HepG2 (cell line): ENCODE measurements at regions of chr18 and their contacts with region 1.

Region 1: DNA sequence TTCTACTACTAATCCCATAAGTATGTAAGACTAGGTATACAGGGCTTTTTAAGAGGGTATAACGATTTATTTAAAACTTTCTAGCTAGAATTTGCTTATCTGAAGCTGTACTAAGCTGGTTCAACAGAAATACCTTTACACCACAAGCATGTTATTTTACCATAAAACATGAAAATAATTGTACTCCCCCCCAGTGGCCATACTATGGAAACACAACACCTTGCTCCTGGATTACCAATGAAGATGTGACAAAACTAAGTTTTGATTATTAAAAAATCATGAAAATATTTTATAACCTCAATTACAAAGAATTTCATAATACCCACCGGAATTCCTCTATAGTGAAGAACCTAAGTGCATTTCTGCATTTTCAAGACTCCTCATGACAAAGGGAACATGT is 27.3 kb downstream of the LPIN2 start:
- DNase-seq: peak; percentile 50
- ATAC-seq: no peak
- H3K4me3 ChIP-seq: no peak overlapping the region
- H3K27ac ChIP-seq: peak overlapping the region; percentile 81
- H3K4me1 ChIP-seq: peaks cover 99% of the 10 kb centered on the region
- H3K27me3 ChIP-seq: no peaks in the 10 kb centered on the region
- CTCF ChIP-seq: peak; percentile 36; the same call in 1 of the 2 replicates
- EP300 ChIP-seq: no peak
- POLR2A ChIP-seq: no peak
- RAD21 ChIP-seq: no peak

Region 2: DNA sequence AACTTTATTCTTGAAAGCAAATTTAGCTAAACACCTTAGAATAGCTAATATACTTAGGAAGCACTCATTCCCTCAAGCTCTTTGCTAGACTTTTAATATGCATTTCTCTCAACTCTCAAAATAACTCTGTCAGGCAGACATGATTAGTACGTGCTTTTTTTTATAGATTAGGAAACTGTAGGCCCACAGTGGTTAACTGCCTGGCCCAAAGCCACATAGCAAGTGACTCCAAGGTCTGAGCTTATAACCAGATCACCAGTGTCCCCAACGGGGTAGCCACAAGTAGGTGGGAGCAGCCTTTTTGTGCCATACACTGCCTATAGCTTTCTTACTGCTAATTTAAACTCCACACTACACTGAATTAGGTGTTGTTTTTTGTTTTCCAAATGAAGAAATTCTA is 991.2 kb before region 1 on chr18:
- CTCF ChIA-PET with region 1: no interaction called
- POLR2A ChIA-PET with region 1: no interaction called
- in situ Hi-C with region 1: no loop called
- intact Hi-C with region 1: no loop called
- DNase-seq: no peak
- ATAC-seq: no peak
- H3K4me3 ChIP-seq: no peak overlapping the region
- H3K27ac ChIP-seq: no peak overlapping the region
- H3K4me1 ChIP-seq: no peaks in the 10 kb centered on the region
- H3K27me3 ChIP-seq: no peaks in the 10 kb centered on the region
- CTCF ChIP-seq: no peak
- EP300 ChIP-seq: no peak
- POLR2A ChIP-seq: no peak
- RAD21 ChIP-seq: no peak

Region 3: GRCh38 chr18:2932247-2933181 is 53.1 kb before region 1 on chr18:
- CTCF ChIA-PET with region 1: interaction called, 4 read pairs
- POLR2A ChIA-PET with region 1: interaction called, 5 read pairs
- in situ Hi-C with region 1: no loop called
- intact Hi-C with region 1: loop called (anchors 1 kb)
- DNase-seq: peak; percentile 62
- ATAC-seq: peak; percentile 77
- H3K4me3 ChIP-seq: no peak overlapping the region
- H3K27ac ChIP-seq: peak overlapping the region; percentile 24
- H3K4me1 ChIP-seq: peaks cover 17% of the 10 kb centered on the region
- H3K27me3 ChIP-seq: no peaks in the 10 kb centered on the region
- CTCF ChIP-seq: peak; percentile 69
- EP300 ChIP-seq: no peak
- POLR2A ChIP-seq: peak in 1 of 2 experiments; percentile 14; a peak in 1 of 4 replicates
- RAD21 ChIP-seq: peak; percentile 45; the same call in 1 of the 2 replicates

Region 4: GRCh38 chr18:2939317-2939716 is 46.3 kb before region 1 on chr18:
- CTCF ChIA-PET with region 1: no interaction called
- POLR2A ChIA-PET with region 1: interaction called, 24 read pairs
- in situ Hi-C with region 1: no loop called
- intact Hi-C with region 1: no loop called
- DNase-seq: peak; percentile 90
- ATAC-seq: peak; percentile 99
- H3K4me3 ChIP-seq: no peak overlapping the region; a peak in 1 of 6 replicates
- H3K27ac ChIP-seq: peak overlapping the region; percentile 72
- H3K4me1 ChIP-seq: peaks cover 36% of the 10 kb centered on the region
- H3K27me3 ChIP-seq: no peaks in the 10 kb centered on the region
- CTCF ChIP-seq: no peak
- EP300 ChIP-seq: peak in 1 of 2 experiments; percentile 51; a peak in 1 of 4 replicates
- POLR2A ChIP-seq: peak; percentile 53 to 63; a peak in 2 of 4 replicates
- RAD21 ChIP-seq: no peak

Region 5: GRCh38 chr18:3012964-3013804 is 27.6 kb after region 1 on chr18 and contains the start of gene LPIN2:
- CTCF ChIA-PET with region 1: no interaction called
- POLR2A ChIA-PET with region 1: interaction called, 22 read pairs
- in situ Hi-C with region 1: no loop called
- intact Hi-C with region 1: no loop called
- DNase-seq: peak; percentile 95
- ATAC-seq: peak; percentile 83
- H3K4me3 ChIP-seq: peak within 1 kb of the TSS; percentile 80 to 85 (median 84)
- H3K27ac ChIP-seq: peak within 1 kb of the TSS; percentile 94
- H3K4me1 ChIP-seq: peaks cover 76% of the 10 kb centered on the region
- H3K27me3 ChIP-seq: no peaks in the 10 kb centered on the region; a peak in 1 of 5 replicates
- CTCF ChIP-seq: no peak
- EP300 ChIP-seq: peak in 1 of 2 experiments; percentile 20; a peak in 1 of 4 replicates
- POLR2A ChIP-seq: peak; percentile 55 to 66
- RAD21 ChIP-seq: peak; percentile 72
- total RNA-seq, gene LPIN2: 46.0 and 59.5 TPM in 2 replicates

Region 6: GRCh38 chr18:3037423-3037915 is 51.8 kb after region 1 on chr18:
- CTCF ChIA-PET with region 1: no interaction called
- POLR2A ChIA-PET with region 1: interaction called, 3 read pairs
- in situ Hi-C with region 1: no loop called
- intact Hi-C with region 1: loop called (anchors 2 kb)
- DNase-seq: peak; percentile 98
- ATAC-seq: peak; percentile 100
- H3K4me3 ChIP-seq: no peak overlapping the region; a peak in 1 of 6 replicates
- H3K27ac ChIP-seq: peak overlapping the region; percentile 73
- H3K4me1 ChIP-seq: peaks cover 57% of the 10 kb centered on the region
- H3K27me3 ChIP-seq: no peaks in the 10 kb centered on the region; a peak in 1 of 5 replicates
- CTCF ChIP-seq: no peak
- EP300 ChIP-seq: peak; percentile 66 to 96; a peak in 3 of 4 replicates
- POLR2A ChIP-seq: peak in 1 of 2 experiments; percentile 44; a peak in 1 of 4 replicates
- RAD21 ChIP-seq: no peak

Region 7: GRCh38 chr18:3074087-3074486 is 88.5 kb after region 1 on chr18:
- CTCF ChIA-PET with region 1: no interaction called
- POLR2A ChIA-PET with region 1: no interaction called
- in situ Hi-C with region 1: no loop called
- intact Hi-C with region 1: no loop called
- DNase-seq: peak; percentile 46
- ATAC-seq: peak; percentile 86
- H3K4me3 ChIP-seq: no peak overlapping the region
- H3K27ac ChIP-seq: peak overlapping the region; percentile 33
- H3K4me1 ChIP-seq: peaks cover 49% of the 10 kb centered on the region
- H3K27me3 ChIP-seq: no peaks in the 10 kb centered on the region
- CTCF ChIP-seq: no peak
- EP300 ChIP-seq: peak in 1 of 2 experiments; percentile 61; a peak in 2 of 4 replicates
- POLR2A ChIP-seq: no peak
- RAD21 ChIP-seq: no peak

Region 8: GRCh38 chr18:3234457-3234856 is 248.8 kb after region 1 on chr18:
- CTCF ChIA-PET with region 1: no interaction called
- POLR2A ChIA-PET with region 1: interaction called, 15 read pairs
- in situ Hi-C with region 1: no loop called
- intact Hi-C with region 1: no loop called
- DNase-seq: no peak
- ATAC-seq: peak; percentile 8
- H3K4me3 ChIP-seq: peak overlapping the region in 1 of 3 experiments; percentile 8; a peak in 1 of 6 replicates
- H3K27ac ChIP-seq: peak overlapping the region; percentile 95
- H3K4me1 ChIP-seq: peaks cover 66% of the 10 kb centered on the region
- H3K27me3 ChIP-seq: no peaks in the 10 kb centered on the region
- CTCF ChIP-seq: no peak
- EP300 ChIP-seq: no peak
- POLR2A ChIP-seq: no peak
- RAD21 ChIP-seq: no peak